Posterior cingulate gyrus (tissue), 11 donors: ENCODE measurements at regions of chr22 and their contacts with region 1.

Region 1: DNA sequence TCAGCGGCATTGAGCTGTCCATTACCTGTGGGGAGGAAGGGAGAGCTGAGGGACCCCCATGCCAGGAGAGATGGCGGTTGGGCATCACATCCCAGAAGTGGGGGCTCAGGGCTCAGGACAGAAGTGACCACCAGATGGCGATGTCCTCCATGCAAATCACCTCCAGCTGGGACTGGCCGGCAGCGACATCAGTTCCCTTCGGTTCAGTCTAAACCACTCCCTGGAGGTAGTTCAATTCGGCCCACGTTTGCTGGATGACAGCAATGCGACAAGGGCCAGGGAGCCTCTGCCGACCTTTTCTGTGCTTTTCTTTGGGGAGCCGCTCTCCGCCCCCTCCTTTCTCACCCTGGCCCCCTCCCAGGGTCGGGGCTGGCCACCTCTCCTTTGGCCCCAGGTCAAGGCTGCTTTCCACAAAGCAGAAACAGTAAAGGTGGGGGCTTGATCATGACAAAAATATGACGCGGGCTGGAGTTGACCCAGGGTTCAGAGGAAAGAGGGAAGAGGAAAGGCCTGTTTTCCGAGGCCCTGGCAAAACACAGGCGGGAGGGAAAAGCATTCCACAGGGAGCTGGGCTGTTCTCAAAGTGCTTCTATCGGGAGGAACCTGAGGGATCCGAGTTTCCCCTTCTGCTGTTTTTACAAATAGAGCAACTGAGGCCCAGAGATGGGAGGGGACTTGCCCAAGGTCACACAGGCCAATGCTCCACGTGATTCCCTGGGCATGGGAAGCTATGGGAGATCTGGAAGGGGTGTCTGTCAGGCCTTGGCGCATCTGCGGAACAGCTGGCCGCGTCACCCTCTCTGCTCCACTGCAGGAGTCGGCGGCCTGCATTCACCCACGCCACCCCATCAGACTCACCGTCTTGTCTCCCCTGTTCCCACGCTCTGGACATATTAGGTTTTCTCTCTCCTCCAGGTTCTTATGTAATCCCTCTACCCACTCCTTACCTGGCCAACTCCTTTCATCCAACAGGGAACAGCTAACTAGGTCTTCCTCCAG is 54.7 kb downstream of the FBXO7 start:
- DNase-seq: peak; percentile 76 to 98 (median 88)

Region 2: DNA sequence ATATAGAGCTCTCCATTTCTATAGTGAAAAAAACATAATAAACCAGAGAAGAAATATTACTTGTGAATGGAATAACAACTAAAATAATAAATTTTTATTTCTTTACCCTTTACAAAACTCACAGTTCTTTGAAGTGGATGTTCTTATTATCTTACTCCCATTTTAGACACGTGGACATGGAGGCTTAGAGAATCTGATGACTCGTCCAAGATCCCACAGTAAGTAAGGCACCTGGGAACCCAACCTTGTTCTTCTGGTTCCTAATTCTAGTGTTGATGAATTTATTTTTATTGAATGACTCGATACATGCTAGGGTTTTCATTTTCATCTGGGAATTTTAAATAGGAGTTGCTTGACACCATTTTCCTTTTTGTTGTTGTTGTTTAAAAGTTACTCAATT is 66.8 kb before region 1 on chr22:
- intact Hi-C with region 1: no loop called
- DNase-seq: no peak

Region 3: DNA sequence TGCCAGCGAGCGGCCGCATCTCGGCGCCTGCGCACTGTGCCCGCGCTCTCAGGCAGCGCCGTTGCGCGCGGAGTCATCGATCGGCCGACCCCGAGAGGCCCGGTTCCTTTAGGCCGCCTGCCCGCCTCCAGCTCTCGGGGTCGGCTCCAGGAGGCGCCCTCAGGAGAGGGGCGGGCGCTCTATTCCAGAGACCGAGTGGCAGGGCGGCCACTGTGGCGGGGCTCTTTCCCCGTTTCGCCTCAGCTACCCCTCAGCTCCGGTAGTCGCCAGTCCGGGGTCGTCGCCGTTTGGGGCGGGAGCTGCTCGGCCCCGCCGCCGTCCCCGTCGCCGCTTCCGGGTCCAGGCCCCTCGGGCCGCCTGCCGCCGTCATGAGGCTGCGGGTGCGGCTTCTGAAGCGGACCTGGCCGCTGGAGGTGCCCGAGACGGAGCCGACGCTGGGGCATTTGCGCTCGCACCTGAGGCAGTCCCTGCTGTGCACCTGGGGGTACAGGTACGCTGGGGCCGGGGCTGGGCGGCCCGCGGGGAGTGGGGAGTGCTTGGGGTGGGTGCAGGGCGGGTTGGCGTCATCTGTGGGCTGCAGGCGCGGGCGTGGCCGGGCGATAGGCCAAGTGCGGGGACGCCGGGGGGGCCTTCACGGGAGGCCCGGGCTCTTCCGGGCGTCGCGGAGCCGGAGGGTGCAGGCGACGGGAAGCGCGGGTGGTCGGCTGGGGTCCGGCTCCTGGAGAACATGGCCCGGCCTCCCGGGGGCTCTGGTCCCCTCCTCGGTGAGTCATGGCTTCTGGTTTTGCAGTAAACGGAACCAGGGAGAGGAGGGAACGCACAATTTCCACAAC is 54.4 kb before region 1 on chr22 and contains the start of gene FBXO7:
- intact Hi-C with region 1: loop called (anchors 2 kb)
- DNase-seq: peak; percentile 86 to 99 (median 92)

Region 4: GRCh38 chr22:32796865-32797573 is 267.7 kb after region 1 on chr22:
- intact Hi-C with region 1: loop called (anchors 2 kb)
- DNase-seq: peak in 9 of 10 donors; percentile 43 to 97 (median 78)

Region 5: GRCh38 chr22:32951076-32951806 is 422.0 kb after region 1 on chr22:
- intact Hi-C with region 1: no loop called
- DNase-seq: peak in 1 of 10 donors; percentile 77

Region 6: DNA sequence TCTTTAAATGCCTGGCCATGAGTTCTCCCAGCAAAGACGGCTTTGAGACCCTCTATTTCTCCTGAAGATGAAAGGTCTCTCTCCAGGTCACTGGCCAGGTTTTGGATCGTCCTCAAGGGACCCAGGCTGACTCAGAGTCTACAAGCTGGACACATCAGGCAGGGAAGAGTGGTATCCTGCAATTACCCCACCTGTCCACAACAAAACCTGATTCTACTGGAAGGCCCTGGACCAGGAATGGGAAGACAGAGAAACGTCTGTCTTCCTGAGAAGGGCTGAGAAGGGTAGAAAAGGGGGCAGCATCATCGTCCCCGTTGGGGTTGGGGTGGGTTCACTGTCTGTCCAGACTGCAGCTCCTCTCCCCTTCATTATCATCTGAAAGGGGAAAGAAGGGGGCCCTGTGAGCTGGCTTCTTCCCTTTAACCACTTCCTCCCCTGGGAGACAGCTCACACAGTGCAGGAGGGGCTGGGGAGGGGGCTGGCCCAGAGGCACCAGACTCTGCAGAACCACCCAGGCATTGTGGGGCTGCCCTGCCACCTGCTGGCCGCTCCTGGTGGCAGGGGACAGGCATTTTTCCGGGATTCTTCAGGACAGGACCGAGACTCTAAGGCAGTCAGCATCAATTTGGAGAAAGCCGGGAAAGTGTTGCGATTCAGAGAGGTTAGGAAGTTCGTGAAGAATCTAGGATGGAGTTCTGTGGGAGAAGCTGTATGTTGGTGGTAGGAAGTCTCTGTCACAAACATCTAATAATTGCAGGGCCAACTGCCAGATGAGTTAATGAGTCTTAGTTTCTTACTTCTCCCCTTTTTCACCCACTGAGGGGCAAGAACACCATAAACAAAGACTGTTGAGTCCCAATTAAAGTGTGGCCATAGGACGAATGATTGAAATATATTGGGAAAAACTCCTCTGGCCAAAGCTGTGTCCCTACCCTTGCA is 471.3 kb after region 1 on chr22:
- intact Hi-C with region 1: loop called (anchors 1 kb)
- DNase-seq: peak; percentile 38 to 93 (median 64)